Natural killer cell (primary cell): ENCODE measurements at regions of chr1 and their contacts with region 1.

Region 1: GRCh38 chr1:37989361-37989930 is 376 bp downstream of the SF3A3 start:
- DNase-seq: peak; percentile 44 to 60
- ATAC-seq: peak; percentile 26 to 48 (median 48)
- H3K4me3 ChIP-seq: peak overlapping the region; percentile 91
- H3K4me3 Mint-ChIP-seq: peak overlapping the region; percentile 99
- H3K27ac ChIP-seq: peak overlapping the region; percentile 59
- H3K27ac Mint-ChIP-seq: peak overlapping the region; percentile 93 to 96
- H3K4me1 ChIP-seq: peaks cover 14% of the 10 kb centered on the region
- H3K4me1 Mint-ChIP-seq: peaks cover 22 to 44% of the 10 kb centered on the region in 2 donors
- H3K27me3 ChIP-seq: no peaks in the 10 kb centered on the region
- H3K27me3 Mint-ChIP-seq: no peaks in the 10 kb centered on the region
- CTCF ChIP-seq: no peak

Region 2: GRCh38 chr1:37890378-37891014 is 99.0 kb before region 1 on chr1:
- intact Hi-C with region 1: loop called (anchors 1 kb)
- DNase-seq: peak in 1 of 2 donors; percentile 64
- ATAC-seq: peak; percentile 46 to 76 (median 75)
- H3K4me3 ChIP-seq: no peak overlapping the region
- H3K4me3 Mint-ChIP-seq: peak overlapping the region; percentile 32
- H3K27ac ChIP-seq: peak overlapping the region; percentile 30
- H3K27ac Mint-ChIP-seq: peak overlapping the region; percentile 54 to 85
- H3K4me1 ChIP-seq: no peaks in the 10 kb centered on the region
- H3K4me1 Mint-ChIP-seq: peaks cover 13 to 14% of the 10 kb centered on the region in 2 donors
- H3K27me3 ChIP-seq: no peaks in the 10 kb centered on the region
- H3K27me3 Mint-ChIP-seq: no peaks in the 10 kb centered on the region
- CTCF ChIP-seq: peak; percentile 66

Region 3: DNA sequence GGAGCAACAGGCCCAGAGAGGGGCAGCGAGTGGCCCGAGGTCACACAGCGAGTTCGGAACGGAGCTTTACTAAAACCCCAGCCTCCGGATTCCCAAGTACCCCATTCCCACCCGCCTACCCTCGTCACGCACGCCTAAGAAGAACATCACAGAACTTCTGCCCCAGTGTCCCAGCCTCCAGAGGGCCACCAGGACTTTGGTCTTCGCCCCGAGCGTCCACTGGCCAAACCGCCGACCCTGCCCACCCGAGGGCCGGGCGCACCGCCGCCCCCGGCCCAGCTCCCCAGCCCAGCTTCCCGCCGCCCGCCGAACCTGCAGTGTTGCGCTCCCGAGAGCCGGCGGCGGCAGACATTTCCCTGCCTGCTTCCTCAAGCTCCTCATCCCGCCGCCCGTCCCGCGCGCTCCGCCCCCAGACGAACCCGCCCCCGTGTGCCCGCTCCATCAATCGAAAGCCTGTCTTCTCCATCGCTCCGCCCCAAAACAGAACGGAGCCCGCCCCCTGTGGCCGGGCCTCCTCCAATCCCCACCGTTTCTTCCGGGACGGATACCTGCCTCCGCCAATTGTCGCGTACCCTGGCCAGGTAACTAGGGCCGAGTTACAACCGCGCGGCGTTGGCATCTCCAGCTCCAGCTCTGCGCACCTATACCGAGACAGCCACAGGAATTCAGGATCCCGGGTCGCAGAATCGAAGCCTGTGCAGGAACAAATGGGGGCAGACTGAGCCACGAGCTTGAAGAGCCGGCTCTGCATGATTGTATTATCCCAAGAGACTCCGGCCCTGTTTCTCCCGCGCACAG is 57.9 kb before region 1 on chr1:
- intact Hi-C with region 1: loop called (anchors 1 kb)
- DNase-seq: peak; percentile 94 to 97
- ATAC-seq: peak; percentile 98 to 99 (median 99)
- H3K4me3 ChIP-seq: peak overlapping the region; percentile 88
- H3K4me3 Mint-ChIP-seq: peak overlapping the region; percentile 96
- H3K27ac ChIP-seq: peak overlapping the region; percentile 58
- H3K27ac Mint-ChIP-seq: peak overlapping the region; percentile 84 to 90
- H3K4me1 ChIP-seq: peaks cover 36% of the 10 kb centered on the region
- H3K4me1 Mint-ChIP-seq: peaks cover 24 to 40% of the 10 kb centered on the region in 2 donors
- H3K27me3 ChIP-seq: no peaks in the 10 kb centered on the region
- H3K27me3 Mint-ChIP-seq: no peaks in the 10 kb centered on the region
- CTCF ChIP-seq: no peak

Region 4: DNA sequence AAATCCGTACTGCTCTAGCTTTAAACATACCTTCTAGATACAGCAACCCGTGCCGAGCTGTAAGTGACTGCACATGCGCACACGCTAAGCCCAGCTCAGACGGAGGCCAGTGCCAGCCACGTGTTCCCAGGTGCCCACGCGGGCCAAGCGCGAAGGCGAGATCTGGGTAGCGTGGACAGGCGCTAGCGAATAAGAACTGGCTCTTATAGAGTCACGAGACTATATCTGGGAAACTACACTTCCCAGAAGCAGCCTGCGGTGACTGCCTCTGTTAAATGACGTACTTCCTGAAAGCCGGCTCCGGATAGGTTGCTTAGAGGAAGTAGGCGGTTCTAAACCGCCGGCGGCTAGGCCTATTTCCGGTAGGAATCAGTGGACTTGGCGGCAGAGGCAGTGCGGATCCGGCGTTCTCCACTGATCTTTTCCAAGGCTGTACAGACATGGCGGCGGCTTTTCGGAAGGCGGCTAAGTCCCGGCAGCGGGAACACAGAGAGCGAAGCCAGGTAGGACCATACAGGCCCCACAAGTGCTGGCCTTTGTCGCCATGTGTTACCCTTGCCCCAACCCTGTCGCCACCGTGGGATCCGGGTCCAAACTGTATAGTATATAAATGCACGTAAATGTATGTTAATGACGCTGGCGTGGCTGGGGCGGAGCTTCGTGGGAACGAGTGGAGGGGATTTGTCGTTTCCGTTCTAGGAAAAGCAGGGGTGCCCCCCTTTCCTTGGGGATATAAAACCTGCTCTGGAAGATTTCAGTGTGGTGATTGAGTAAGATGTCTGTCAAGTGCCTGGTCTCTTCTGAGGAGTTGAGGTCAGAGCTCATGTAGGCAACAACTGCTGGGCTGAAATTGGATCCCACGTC is 23.1 kb after region 1 on chr1 and contains the start of gene UTP11:
- intact Hi-C with region 1: loop called (anchors 2 kb)
- DNase-seq: peak; percentile 86 to 96
- ATAC-seq: peak; percentile 78 to 94 (median 88)
- H3K4me3 ChIP-seq: peak within 1 kb of the TSS; percentile 65
- H3K4me3 Mint-ChIP-seq: peak within 1 kb of the TSS; percentile 99
- H3K27ac ChIP-seq: peak within 1 kb of the TSS; percentile 79
- H3K27ac Mint-ChIP-seq: peak within 1 kb of the TSS; percentile 96 to 100
- H3K4me1 ChIP-seq: peaks cover 58% of the 10 kb centered on the region
- H3K4me1 Mint-ChIP-seq: peaks cover 57 to 60% of the 10 kb centered on the region in 2 donors
- H3K27me3 ChIP-seq: no peaks in the 10 kb centered on the region
- H3K27me3 Mint-ChIP-seq: no peaks in the 10 kb centered on the region
- CTCF ChIP-seq: no peak
- total RNA-seq, gene UTP11: 13.4 to 20.7 (median 19.2) TPM